ENCODE measurements at regions of chr3 and their contacts with region 1.

Region 1: GRCh38 chr3:3038201-3038991 is 71.8 kb downstream of the IL5RA start:
- DNase-seq: no peak
- H3K4me3 ChIP-seq: no peak overlapping the region
- H3K27ac ChIP-seq: no peak overlapping the region
- H3K27me3 ChIP-seq: no peaks in the 10 kb centered on the region
- CTCF ChIP-seq: no peak

Region 2: DNA sequence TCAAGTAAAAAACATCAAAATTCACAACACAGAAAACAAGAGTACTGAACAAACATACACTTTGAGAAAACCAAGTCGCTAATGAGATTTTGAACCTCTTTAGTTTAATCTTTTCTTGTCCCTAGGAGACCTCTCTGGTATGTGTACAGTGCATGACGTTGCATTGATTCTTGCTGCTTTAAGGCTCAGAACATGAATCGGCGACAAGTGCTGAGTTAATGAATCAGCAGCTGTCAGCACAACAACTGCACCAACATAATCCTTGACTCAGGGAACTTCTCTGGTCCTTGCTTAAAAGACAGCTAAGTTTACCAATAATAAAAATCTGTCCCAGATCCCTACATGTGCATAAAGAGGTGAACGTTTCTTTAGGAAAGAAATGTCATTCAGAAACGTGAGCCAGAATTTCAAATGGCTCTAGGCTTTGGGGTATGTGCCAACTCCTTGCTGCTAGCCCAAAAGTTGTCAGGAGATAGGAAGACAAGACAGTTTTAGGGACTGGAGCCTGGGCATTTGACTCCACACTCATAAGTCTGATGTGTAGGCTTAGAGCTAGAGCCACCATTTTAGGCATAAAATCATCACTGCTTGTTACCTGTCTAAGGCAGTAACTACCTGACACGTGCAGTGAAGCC is 15.2 kb before region 1 on chr3:
- CTCF ChIA-PET with region 1: interaction called, 10 read pairs
- POLR2A ChIA-PET with region 1: no interaction called
- DNase-seq: no peak
- H3K4me3 ChIP-seq: no peak overlapping the region
- H3K27ac ChIP-seq: no peak overlapping the region
- H3K27me3 ChIP-seq: no peaks in the 10 kb centered on the region
- CTCF ChIP-seq: no peak